ENCODE measurements at regions of chr17 and their contacts with region 1.

Region 1: GRCh38 chr17:42422958-42423712 is at the start of gene CAVIN1:
- DNase-seq: peak; percentile 99 to 100
- ATAC-seq: peak; percentile 80 to 88
- H3K4me3 ChIP-seq: peak within 1 kb of the TSS; percentile 87 to 99 (median 95)
- H3K27ac ChIP-seq: peak within 1 kb of the TSS; percentile 96 to 100 (median 98)
- H3K4me1 ChIP-seq: peaks cover 30 to 35% of the 10 kb centered on the region in 2 donors
- H3K27me3 ChIP-seq: no peaks in the 10 kb centered on the region
- CTCF ChIP-seq: peak in 1 of 5 experiments; percentile 8
- POLR2A ChIP-seq: peak; percentile 92 to 95
- total RNA-seq, gene CAVIN1: 64.9 to 137 (median 125) TPM

Region 2: GRCh38 chr17:42388381-42389134 is 34.6 kb before region 1 on chr17 and contains the start of gene STAT3:
- in situ Hi-C with region 1: no loop called
- intact Hi-C with region 1: loop called (anchors 1 kb)
- DNase-seq: peak; percentile 100
- ATAC-seq: peak; percentile 87 to 94
- H3K4me3 ChIP-seq: peak within 1 kb of the TSS; percentile 93 to 98 (median 96)
- H3K27ac ChIP-seq: peak within 1 kb of the TSS; percentile 98 to 99 (median 99)
- H3K4me1 ChIP-seq: peaks cover 21 to 34% of the 10 kb centered on the region in 2 donors
- H3K27me3 ChIP-seq: no peaks in the 10 kb centered on the region
- CTCF ChIP-seq: peak in 1 of 5 experiments; percentile 19
- POLR2A ChIP-seq: peak; percentile 96 to 99
- total RNA-seq, gene STAT3: 88.4 to 203 (median 130) TPM

Region 3: DNA sequence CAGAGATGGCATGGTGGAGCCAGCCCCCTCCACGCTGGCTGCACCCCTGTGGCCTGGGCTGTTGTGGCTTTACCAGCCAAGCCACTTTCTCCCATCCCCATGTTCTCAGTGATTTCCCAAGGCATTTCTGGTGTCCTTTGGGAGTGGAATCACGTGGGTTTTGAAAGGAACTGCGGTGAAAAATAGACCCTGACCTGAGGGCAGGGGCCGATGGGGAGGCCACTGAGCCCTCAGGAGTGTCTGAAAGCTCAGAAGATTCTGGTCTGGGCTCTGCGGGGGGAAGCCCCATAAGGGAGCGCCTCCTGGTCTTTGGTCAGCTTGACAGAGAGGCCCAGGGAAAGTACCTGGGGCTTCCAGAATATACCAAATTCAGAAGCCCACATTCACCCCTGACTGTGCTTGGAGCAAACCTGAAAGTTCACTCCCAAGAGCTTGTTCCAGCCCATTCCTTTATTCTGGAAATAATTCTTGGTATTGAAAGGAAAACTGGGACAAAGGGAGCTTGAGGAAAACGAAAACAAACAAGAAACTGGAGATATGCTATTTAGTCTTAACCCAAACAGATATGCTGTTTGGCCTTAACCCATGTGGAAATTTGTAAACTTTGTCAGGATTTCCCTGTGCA is 89.6 kb after region 1 on chr17:
- in situ Hi-C with region 1: no loop called
- intact Hi-C with region 1: no loop called
- DNase-seq: no peak
- ATAC-seq: no peak
- H3K4me3 ChIP-seq: no peak overlapping the region
- H3K27ac ChIP-seq: peak overlapping the region; percentile 48 to 68 (median 52)
- H3K4me1 ChIP-seq: peaks cover 9 to 17% of the 10 kb centered on the region in 2 donors
- H3K27me3 ChIP-seq: no peaks in the 10 kb centered on the region
- CTCF ChIP-seq: no peak
- POLR2A ChIP-seq: no peak

Region 4: GRCh38 chr17:42527273-42527703 is 104.2 kb after region 1 on chr17:
- in situ Hi-C with region 1: loop called in 1 of 4 experiments (anchors 10 kb)
- intact Hi-C with region 1: loop called (anchors 5 kb)
- DNase-seq: peak; percentile 59 to 85
- ATAC-seq: peak; percentile 72 to 75
- H3K4me3 ChIP-seq: no peak overlapping the region
- H3K27ac ChIP-seq: peak overlapping the region; percentile 77 to 89 (median 86)
- H3K4me1 ChIP-seq: peaks cover 31 to 38% of the 10 kb centered on the region in 2 donors
- H3K27me3 ChIP-seq: no peaks in the 10 kb centered on the region
- CTCF ChIP-seq: peak; percentile 81 to 88 (median 83)
- POLR2A ChIP-seq: no peak

Measured in gastrocnemius medialis (tissue), 4 donors.